Transverse colon (tissue), 4 donors: ENCODE measurements at regions of chrX and their contacts with region 1.

Region 1: GRCh38 chrX:41543668-41544067 is 96.5 kb downstream of the NYX start:
- DNase-seq: no peak
- H3K4me3 ChIP-seq: no peak overlapping the region
- H3K27ac ChIP-seq: no peak overlapping the region
- H3K4me1 ChIP-seq: no peaks in the 10 kb centered on the region
- H3K27me3 ChIP-seq: no peaks in the 10 kb centered on the region
- CTCF ChIP-seq: no peak
- EP300 ChIP-seq: no peak
- POLR2A ChIP-seq: no peak

Region 2: DNA sequence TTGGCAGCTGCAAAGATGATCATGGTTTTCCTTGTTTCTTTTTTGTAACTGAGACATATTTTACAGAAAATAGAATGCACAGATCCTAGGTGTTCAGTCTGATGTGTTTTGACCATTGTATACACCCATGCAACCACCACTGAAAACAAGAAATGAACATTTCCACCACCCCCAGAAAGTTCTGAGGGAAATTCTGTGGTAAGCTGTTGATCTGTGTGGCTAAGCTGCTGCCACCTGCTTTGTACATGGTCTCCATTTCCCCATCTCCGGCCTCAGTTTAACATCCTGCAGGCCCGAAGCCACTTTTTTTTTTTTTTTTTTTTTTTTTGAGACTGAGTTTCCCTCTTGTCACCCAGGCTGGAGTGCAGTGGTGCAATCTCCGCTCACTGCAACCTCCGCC is 31.3 kb before region 1 on chrX:
- in situ Hi-C with region 1: no loop called
- intact Hi-C with region 1: loop called (anchors 1 kb)
- DNase-seq: no peak
- H3K4me3 ChIP-seq: no peak overlapping the region
- H3K27ac ChIP-seq: no peak overlapping the region
- H3K4me1 ChIP-seq: no peaks in the 10 kb centered on the region
- H3K27me3 ChIP-seq: no peaks in the 10 kb centered on the region
- CTCF ChIP-seq: no peak
- EP300 ChIP-seq: no peak
- POLR2A ChIP-seq: no peak